GM13976 (cell line): ENCODE measurements at regions of chr4 and their contacts with region 1.

Region 1: GRCh38 chr4:112075129-112075753 is 70.0 kb upstream of the FAM241A start:
- DNase-seq: peak; percentile 58
- CTCF ChIP-seq: peak; percentile 78

Region 2: GRCh38 chr4:112266821-112267220 is 191.6 kb after region 1 on chr4:
- in situ Hi-C with region 1: no loop called
- DNase-seq: no peak
- CTCF ChIP-seq: peak; percentile 16

Region 3: DNA sequence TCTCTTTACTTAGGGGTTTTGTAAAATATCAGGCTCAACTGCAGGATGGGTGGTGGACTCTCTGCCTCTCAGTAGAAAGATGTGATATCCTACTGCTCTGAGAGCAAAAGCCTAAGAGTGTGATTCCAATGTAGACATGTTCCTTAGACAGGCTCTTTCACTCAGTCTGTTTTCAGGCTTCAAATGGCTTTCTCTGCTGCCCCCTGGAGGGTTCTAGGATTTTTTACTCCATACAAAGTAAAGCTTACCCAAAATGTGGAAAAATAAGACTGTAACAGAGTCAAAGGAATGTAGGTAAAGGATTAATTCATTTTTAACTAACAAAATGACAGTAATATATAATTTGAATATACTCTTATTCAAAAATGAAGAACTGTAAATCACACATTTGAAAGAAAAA is 529.3 kb after region 1 on chr4:
- in situ Hi-C with region 1: loop called (anchors 25 kb)
- DNase-seq: peak; percentile 54
- CTCF ChIP-seq: peak; percentile 44